Activated CD4-positive, alpha-beta T cell treated with anti-CD3 and anti-CD28 coated beads, Interleukin-2, amount 10 ng/mL, durations not matched to agents 24 days and 14 days (primary cell): ENCODE measurements at regions of chr6 and their contacts with region 1.

Region 1: GRCh38 chr6:108113557-108114519 is 39.3 kb upstream of the OSTM1 start:
- DNase-seq: peak; percentile 79
- H3K4me3 Mint-ChIP-seq: peak overlapping the region; percentile 54
- H3K27ac Mint-ChIP-seq: no peak overlapping the region
- H3K4me1 Mint-ChIP-seq: peaks cover 32% of the 10 kb centered on the region
- H3K27me3 Mint-ChIP-seq: peaks cover 80% of the 10 kb centered on the region

Region 2: GRCh38 chr6:107489636-107490565 is 623.9 kb before region 1 on chr6 and contains the start of gene SOBP:
- intact Hi-C with region 1: loop called (anchors 5 kb)
- DNase-seq: peak; percentile 78
- H3K4me3 Mint-ChIP-seq: peak within 1 kb of the TSS; percentile 89
- H3K27ac Mint-ChIP-seq: no peak within 1 kb of the TSS
- H3K4me1 Mint-ChIP-seq: peaks cover 22% of the 10 kb centered on the region
- H3K27me3 Mint-ChIP-seq: peaks cover 45% of the 10 kb centered on the region
- total RNA-seq, gene SOBP: 0.09 and 0.26 TPM in 2 replicates

Region 3: DNA sequence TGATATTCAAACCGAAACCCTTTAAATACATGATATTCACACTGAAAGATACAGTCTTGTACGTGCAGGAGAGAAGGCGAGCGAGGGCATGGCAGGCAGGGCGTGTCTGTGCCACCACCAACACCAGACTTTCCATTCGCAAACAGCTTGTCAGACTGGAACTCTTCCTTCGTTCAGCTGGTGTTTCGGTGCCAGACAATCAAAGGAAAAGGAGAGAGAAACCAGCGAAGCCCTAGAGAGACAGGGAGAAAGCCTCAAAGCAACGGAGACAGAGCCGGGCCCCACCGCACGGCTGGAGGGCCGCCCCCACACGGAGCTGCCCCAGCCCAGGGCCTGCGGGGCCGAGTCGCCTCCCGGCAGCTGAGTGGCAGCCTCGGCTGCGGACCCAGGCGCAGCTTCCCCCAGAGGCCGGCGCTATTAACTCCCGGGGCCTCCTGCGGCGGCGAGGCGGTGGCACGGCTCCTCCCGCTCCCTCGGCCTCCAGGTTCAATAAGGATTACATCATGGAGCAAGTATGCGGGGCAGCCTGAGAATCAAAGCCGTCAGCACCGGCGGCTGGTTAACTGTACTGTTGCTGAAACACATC is 19.8 kb after region 1 on chr6:
- intact Hi-C with region 1: loop called (anchors 2 kb)
- DNase-seq: peak; percentile 61
- H3K4me3 Mint-ChIP-seq: peak overlapping the region; percentile 80
- H3K27ac Mint-ChIP-seq: no peak overlapping the region
- H3K4me1 Mint-ChIP-seq: peaks cover 6% of the 10 kb centered on the region
- H3K27me3 Mint-ChIP-seq: peaks cover 72% of the 10 kb centered on the region

Region 4: DNA sequence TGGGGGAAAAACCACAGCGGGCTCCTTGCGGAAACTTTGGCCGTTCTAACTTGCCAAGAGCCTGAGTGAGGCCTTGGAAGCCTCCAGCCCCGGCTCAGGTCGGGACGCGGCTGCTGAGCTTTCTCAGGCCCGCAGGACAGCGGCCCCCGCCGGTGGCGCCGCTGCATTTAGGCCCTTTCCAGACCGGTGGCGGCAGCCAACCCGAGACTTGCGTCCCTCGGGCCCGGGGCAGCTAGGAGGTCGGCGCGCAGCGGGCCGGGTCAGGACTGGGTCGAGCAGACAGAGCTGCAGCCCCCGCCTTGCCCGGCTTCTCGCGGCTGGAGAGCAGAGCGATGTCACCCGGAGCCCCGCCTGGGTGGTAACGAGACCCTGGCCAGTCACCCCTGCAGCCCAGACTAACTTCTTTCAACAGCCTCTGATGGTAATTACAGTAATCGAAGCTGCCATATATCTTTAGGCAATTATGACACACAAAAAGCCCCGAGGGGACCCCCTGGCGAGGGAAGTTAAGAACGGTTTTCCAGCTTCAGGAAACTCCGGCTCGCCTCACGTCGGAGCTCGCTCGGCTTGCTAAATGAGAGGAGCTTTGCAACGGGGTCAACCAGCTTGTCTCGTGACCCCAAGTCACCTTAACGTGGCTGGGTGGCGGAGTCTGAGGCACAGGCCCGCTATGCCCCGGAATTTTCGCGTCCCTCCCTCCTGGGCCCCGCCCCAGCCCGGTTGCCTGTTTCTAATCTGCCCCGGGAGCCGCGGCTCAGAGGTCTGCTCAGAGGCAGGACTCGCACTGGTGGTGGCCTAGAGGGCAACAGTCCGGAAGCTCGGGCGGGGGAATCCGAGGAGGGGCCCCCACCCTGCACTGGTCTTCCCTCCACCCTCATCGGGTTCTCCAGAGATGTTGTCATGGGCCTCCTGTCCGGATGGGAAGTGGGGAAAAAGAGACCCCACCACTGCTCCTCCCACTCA is 54.9 kb after region 1 on chr6:
- intact Hi-C with region 1: loop called (anchors 1 kb)
- DNase-seq: peak; percentile 60
- H3K4me3 Mint-ChIP-seq: peak overlapping the region; percentile 7
- H3K27ac Mint-ChIP-seq: no peak overlapping the region
- H3K4me1 Mint-ChIP-seq: peaks cover 18% of the 10 kb centered on the region
- H3K27me3 Mint-ChIP-seq: peaks cover 87% of the 10 kb centered on the region

Region 5: DNA sequence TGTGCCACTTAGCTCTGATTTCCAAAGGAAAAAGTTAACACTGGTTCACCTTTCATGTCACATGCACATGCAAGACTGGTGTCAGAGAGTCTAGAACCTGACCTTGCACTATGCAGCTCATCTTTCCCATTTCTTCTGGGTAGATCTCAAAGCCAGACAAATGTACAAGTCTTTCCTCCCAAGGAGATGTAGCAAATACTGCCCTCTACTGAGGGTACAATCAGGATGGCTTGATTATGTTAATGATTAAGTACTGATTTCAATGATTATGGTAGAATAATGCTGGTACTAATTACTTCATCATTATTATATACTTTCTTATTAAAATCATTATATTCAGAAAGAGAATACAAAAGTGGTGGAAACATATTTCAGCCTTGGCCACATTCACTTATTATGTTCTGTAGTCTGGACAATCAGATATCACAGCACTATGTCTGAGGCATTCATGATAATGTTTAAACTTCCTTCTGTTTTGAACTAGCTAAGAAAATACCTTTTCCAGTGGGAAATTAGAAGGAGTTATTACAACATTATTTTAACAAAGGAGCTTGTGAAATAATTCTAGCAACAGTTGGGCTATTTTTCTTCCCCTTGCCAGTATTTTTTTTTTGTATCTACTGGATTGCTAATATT is 378.4 kb after region 1 on chr6:
- intact Hi-C with region 1: loop called (anchors 2 kb)
- DNase-seq: peak; percentile 58
- H3K4me3 Mint-ChIP-seq: no peak overlapping the region
- H3K27ac Mint-ChIP-seq: no peak overlapping the region
- H3K4me1 Mint-ChIP-seq: no peaks in the 10 kb centered on the region
- H3K27me3 Mint-ChIP-seq: peaks cover 20% of the 10 kb centered on the region

Region 6: DNA sequence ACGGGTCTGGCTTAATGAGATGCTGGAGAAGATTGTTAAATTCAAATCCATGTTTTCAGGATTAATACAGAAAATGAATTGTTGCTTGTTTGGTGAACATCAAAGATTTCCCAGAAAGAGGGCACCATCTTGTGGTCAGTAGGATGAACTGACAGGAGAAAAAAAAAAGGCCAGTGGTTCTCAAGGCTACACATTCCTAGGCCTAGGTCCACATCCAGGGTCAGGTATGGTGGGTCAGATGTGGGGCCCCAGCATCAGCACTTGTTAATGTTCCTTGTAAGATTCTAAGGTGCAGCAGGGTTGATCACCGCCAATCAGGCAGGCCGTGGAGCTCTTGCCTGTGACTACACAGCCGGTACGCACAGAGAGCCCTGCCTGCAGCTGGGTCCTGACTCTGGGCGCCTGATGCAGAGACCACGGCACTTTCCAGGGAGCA is 412.9 kb after region 1 on chr6:
- intact Hi-C with region 1: loop called (anchors 1 kb)
- DNase-seq: no peak
- H3K4me3 Mint-ChIP-seq: no peak overlapping the region
- H3K27ac Mint-ChIP-seq: no peak overlapping the region
- H3K4me1 Mint-ChIP-seq: no peaks in the 10 kb centered on the region
- H3K27me3 Mint-ChIP-seq: peaks cover 10% of the 10 kb centered on the region